Activated CD4-positive, alpha-beta memory T cell treated with anti-CD3 and anti-CD28 coated beads for 36 hours (primary cell): ENCODE measurements at regions of chr19 and their contacts with region 1.

Region 1: GRCh38 chr19:1672038-1672768 is 19.8 kb upstream of the TCF3 start:
- DNase-seq: peak; percentile 58
- H3K4me3 Mint-ChIP-seq: no peak overlapping the region
- H3K27ac Mint-ChIP-seq: no peak overlapping the region
- H3K4me1 Mint-ChIP-seq: peaks cover 16% of the 10 kb centered on the region
- H3K27me3 Mint-ChIP-seq: peaks cover 46% of the 10 kb centered on the region

Region 2: DNA sequence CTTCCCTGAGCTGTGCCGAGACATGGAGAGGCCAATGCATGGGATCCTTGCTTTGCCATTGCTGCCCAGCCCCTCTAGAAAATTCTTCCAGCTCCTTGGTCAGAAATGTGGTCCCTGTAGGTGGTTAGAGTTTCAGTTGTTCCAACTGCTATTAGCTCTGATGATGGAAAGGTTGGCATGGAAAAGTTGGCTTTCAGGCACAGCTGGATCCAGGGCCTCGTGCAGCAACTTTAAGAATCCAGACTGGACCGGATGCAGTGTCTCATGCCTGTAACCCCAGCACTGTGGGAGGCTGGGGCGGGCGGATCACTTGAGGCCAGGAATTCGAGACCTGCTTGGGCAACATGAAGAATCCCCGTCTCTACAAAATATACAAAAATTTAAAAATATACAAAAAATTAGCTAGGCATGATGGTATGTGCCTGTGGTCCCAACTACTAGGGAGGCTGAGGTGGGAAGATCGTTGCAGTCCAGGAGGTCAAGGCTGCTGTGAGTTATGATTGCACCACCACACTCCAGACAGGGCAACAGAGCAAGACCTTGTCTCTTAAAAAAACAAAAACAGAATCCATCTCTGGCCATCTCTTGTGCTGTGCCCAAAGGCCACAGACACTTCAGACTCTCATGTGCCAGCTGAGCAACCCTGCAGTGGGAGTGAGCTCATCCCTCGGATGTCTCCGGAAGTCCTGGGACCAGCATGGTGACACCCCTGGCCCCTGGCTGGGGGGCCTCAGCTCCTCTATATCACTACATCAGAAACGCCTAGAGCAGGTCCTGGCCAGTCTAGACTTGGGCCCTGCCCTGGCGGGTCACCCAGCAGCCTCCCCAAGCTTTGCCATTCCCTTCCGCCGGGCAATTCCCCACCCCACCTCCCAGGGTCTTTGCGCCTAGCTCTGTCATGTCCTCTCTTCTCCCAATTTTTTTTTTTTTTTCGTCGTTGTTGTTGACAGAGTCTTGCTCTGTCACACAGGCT is 120.8 kb before region 1 on chr19:
- CTCF ChIA-PET with region 1: interaction called, 33 read pairs
- POLR2A ChIA-PET with region 1: no interaction called
- intact Hi-C with region 1: loop called (anchors 5 kb)
- DNase-seq: no peak
- H3K4me3 Mint-ChIP-seq: no peak overlapping the region
- H3K27ac Mint-ChIP-seq: no peak overlapping the region
- H3K4me1 Mint-ChIP-seq: peaks cover under 1% of the 10 kb centered on the region
- H3K27me3 Mint-ChIP-seq: peaks cover 14% of the 10 kb centered on the region

Region 3: GRCh38 chr19:1652471-1653299 is 19.5 kb before region 1 on chr19 and contains the start of gene TCF3:
- CTCF ChIA-PET with region 1: interaction called, 32 read pairs
- POLR2A ChIA-PET with region 1: no interaction called
- intact Hi-C with region 1: no loop called
- DNase-seq: peak; percentile 99
- H3K4me3 Mint-ChIP-seq: peak within 1 kb of the TSS; percentile 84
- H3K27ac Mint-ChIP-seq: peak within 1 kb of the TSS; percentile 83
- H3K4me1 Mint-ChIP-seq: peaks cover 29% of the 10 kb centered on the region
- H3K27me3 Mint-ChIP-seq: no peaks in the 10 kb centered on the region
- total RNA-seq, gene TCF3: 88.9 to 95.5 TPM

Region 4: DNA sequence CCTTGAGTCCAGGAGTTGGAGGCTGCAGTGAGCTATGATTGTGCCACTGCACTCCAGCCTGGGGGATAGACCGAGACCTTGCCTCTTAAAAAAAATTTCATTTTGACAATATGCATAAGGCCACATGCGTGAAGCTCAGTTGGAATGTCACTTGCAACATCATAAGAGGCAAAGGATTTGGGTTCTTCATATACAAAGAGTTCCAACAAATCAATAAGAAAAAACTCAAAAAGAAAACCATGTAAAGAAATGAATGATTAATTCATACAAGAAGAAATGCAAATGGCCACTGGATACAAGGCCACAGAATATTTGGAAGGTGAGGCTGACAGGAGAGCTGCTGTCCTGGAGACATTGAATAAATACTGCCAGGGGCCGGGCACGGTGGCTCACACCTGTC is 10.2 kb before region 1 on chr19:
- CTCF ChIA-PET with region 1: interaction called, 12 read pairs
- POLR2A ChIA-PET with region 1: no interaction called
- intact Hi-C with region 1: no loop called
- DNase-seq: no peak
- H3K4me3 Mint-ChIP-seq: no peak overlapping the region
- H3K27ac Mint-ChIP-seq: no peak overlapping the region
- H3K4me1 Mint-ChIP-seq: peaks cover 8% of the 10 kb centered on the region
- H3K27me3 Mint-ChIP-seq: peaks cover 5% of the 10 kb centered on the region